Cardiac septum (tissue), 1 donor: ENCODE measurements at regions of chr3 and their contacts with region 1.

Region 1: GRCh38 chr3:52536369-52537164 is at the start of gene UQCC5:
- DNase-seq: peak; percentile 98
- total RNA-seq, gene UQCC5: 52.9 TPM

Region 2: GRCh38 chr3:52136513-52136912 is 400.1 kb before region 1 on chr3:
- intact Hi-C with region 1: no loop called
- DNase-seq: no peak

Region 3: GRCh38 chr3:52323526-52324295 is 212.9 kb before region 1 on chr3:
- intact Hi-C with region 1: no loop called
- DNase-seq: no peak

Region 4: DNA sequence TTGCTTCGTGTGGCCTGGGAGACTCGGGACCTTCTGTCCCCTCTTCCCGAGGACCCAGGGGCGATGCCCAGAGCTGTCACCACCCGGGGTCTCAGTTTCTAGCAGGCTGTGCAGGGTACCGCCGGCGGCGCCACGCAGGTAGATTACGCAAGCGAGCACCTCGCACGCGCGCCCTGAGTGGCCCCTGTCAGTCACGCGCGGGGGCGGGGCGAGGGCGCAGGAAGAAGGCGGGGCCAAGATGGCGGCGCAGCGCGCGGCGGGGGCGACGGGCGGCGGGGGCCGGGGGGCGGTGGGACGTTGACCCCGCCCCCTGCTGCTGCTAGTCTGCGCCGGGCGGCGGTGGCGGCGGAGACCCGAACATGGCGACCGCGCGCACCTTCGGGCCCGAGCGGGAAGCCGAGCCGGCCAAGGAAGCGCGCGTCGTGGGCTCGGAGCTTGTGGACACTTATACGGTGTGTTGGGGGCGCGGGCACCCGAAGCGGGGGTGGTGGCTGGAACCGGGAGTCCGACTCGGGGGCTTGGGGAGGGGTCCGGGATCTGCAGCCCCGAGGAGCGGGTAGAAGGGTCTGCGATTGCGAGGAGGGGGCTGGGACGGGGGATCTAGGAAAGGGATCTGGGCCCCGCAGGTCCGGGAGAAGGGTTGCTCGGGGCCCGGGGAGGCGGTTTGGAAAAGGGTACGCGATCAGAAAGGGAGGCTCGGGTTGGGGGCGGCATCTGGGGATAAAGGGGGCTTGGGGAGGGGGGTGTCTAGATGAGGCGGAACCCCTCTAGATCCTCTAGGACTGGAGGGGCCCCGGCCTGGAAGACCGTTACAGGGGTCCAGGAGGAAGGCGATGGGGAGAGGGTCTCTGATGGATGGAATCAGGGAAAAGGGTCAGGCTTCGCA is 81.0 kb before region 1 on chr3 and contains the start of gene NISCH:
- intact Hi-C with region 1: loop called (anchors 2 kb)
- DNase-seq: peak; percentile 94
- total RNA-seq, gene NISCH: 59.1 TPM

Region 5: DNA sequence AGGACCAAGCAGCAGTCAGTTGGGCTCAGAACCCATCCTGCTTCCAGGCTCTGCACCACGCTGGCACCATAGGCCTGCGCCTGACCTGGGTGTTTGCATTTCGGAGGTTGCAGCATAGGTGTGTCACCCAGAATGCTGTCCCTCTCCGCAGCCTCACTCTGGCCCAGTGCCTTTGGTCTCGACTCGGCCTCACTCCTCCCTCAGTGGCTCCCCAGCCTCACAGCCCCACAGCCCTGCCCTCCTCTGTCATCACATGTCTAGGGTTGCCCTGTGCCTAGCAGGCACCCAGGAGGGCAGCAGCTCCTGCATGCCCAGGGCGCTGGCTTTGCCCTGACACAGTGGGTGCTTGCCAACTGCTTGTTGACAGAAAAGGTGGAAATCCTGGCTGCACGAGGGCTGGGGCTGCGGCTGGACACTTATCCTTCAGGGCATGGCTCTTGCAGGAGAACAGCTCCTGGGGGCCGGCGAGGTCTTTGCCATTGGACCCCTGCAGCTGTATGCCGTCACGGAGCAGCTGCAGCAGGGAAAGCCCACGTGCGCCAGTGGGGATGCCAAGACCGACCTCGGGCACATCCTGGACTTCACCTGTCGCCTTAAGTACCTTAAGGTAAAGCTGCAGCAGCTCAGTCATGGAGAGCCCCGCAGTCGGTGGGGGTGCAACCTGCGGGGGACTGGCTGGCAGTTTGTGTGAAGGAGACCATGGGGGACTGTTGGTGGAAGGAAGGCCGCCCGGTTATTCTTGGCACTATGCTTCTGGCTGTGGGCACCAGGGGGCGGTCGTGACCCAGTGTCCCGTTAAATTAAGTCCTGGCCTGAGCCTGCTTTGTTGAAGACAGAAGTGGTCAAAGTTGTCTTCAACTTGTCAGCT is 65.0 kb before region 1 on chr3:
- intact Hi-C with region 1: loop called (anchors 5 kb)
- DNase-seq: no peak

Region 6: DNA sequence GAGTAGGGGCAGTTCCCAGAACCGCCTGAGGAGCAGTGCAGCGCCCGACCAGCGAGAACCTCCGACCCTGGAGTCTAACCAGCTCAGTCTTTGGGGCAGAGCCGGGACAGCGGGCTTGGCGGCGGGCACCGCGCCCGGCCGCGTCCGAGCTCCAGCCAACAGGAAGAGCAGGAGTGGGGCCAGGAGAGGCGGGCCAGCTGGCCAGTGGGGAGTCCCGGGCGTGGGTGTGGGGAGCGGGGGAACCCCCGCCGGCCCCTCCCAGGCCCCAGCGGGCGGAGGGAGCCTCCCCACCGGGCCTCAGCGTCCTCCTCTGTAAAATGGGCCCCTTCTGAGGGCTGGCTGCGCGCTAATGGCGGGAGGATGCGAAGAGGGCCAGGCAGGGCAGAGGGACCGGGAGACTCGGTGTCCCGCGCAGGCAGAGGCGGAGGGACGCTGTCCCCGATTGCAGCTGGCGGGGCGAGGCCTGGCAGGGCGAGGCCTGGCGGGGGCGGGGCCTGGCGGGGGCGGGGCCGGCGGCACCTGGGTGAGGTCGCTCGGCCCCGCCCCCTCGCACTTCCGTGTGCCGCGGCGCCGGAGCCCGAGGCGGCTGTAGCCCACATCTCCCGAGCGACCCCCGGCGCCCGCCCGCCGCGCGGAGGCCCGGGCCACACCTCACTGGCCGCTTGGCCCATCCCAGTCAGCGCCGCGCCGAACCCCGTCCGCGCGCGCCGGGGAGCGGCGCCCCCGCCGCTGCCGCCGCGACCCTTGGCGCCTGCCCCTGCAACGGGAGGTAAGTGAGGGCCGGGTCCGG is 624.3 kb after region 1 on chr3 and contains the start of gene PRKCD:
- intact Hi-C with region 1: loop called (anchors 10 kb)
- DNase-seq: peak; percentile 92
- total RNA-seq, gene PRKCD: 10.6 TPM